GM12878 (cell line): ENCODE measurements at regions of chr10 and their contacts with region 1.

Region 1: GRCh38 chr10:110871298-110872084 is at the start of gene PDCD4:
- DNase-seq: peak; percentile 86
- ATAC-seq: peak; percentile 78
- H3K4me3 ChIP-seq: peak within 1 kb of the TSS; percentile 65
- H3K27ac ChIP-seq: peak within 1 kb of the TSS; percentile 99
- H3K4me1 ChIP-seq: peaks cover 48% of the 10 kb centered on the region
- H3K27me3 ChIP-seq: no peaks in the 10 kb centered on the region
- CTCF ChIP-seq: no peak
- EP300 ChIP-seq: no peak
- POLR2A ChIP-seq: peak; percentile 96
- RAD21 ChIP-seq: no peak
- polyA plus RNA-seq, gene PDCD4: 101 to 138 TPM

Region 2: GRCh38 chr10:110843031-110843430 is 28.5 kb before region 1 on chr10:
- CTCF ChIA-PET with region 1: interaction called, 31 read pairs
- POLR2A ChIA-PET with region 1: interaction called, 78 read pairs
- RAD21 ChIA-PET with region 1: interaction called, 138 read pairs
- SMC1A ChIA-PET with region 1: interaction called, 139 read pairs
- in situ Hi-C with region 1: no loop called
- intact Hi-C with region 1: loop called (anchors 1 kb)
- DNase-seq: peak; percentile 98
- ATAC-seq: peak; percentile 74
- H3K4me3 ChIP-seq: peak overlapping the region; percentile 68
- H3K27ac ChIP-seq: peak overlapping the region; percentile 97
- H3K4me1 ChIP-seq: peaks cover 53% of the 10 kb centered on the region
- H3K27me3 ChIP-seq: no peaks in the 10 kb centered on the region
- CTCF ChIP-seq: no peak
- EP300 ChIP-seq: peak; percentile 53 to 91; a peak in 3 of 4 replicates
- POLR2A ChIP-seq: no peak; the same call in 1 of the 2 replicates
- RAD21 ChIP-seq: peak; percentile 37; the same call in 1 of the 2 replicates

Region 3: DNA sequence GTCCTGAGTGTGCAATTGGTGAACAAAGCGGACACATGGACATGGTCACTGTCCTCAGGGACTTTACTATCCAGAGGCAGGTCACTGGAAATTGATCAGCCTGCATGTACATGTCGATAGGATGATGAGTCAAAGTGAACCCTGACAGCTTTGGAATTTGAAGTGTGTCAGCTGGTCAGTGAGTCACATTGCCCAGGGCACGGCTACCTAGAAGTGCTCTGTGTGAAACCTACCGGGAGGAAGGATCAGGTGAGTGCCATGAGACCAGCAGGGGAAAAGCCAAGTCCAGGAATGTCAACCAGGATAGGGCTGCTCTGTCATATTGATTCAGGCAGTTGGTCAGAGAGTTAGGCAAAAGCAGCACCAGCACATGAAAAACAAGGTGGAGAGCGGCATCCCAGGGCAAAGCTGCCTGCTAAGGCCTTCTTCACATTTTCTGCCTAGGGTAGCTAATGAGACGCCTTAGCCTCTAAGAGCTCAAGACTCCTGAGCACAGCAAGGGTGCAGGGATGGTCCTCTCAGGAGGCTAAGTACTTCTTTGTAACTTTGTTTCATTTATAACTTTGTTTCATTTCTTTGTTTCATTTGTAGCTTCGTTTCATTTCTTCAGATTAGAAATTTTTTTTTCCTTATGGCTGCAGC is 19.1 kb before region 1 on chr10:
- CTCF ChIA-PET with region 1: interaction called, 9 read pairs
- POLR2A ChIA-PET with region 1: interaction called, 36 read pairs
- RAD21 ChIA-PET with region 1: interaction called, 138 read pairs
- SMC1A ChIA-PET with region 1: interaction called, 139 read pairs
- in situ Hi-C with region 1: no loop called
- intact Hi-C with region 1: no loop called
- DNase-seq: no peak
- ATAC-seq: peak; percentile 28
- H3K4me3 ChIP-seq: no peak overlapping the region
- H3K27ac ChIP-seq: peak overlapping the region; percentile 39
- H3K4me1 ChIP-seq: peaks cover 53% of the 10 kb centered on the region
- H3K27me3 ChIP-seq: no peaks in the 10 kb centered on the region
- CTCF ChIP-seq: no peak
- EP300 ChIP-seq: no peak
- POLR2A ChIP-seq: no peak
- RAD21 ChIP-seq: no peak

Region 4: GRCh38 chr10:110857265-110858158 is 14.0 kb before region 1 on chr10:
- CTCF ChIA-PET with region 1: interaction called, 6 read pairs
- POLR2A ChIA-PET with region 1: interaction called, 36 read pairs
- RAD21 ChIA-PET with region 1: interaction called, 47 read pairs
- SMC1A ChIA-PET with region 1: interaction called, 86 read pairs
- in situ Hi-C with region 1: no loop called
- intact Hi-C with region 1: no loop called
- DNase-seq: peak; percentile 78
- ATAC-seq: peak; percentile 39
- H3K4me3 ChIP-seq: no peak overlapping the region
- H3K27ac ChIP-seq: peak overlapping the region; percentile 98
- H3K4me1 ChIP-seq: peaks cover 67% of the 10 kb centered on the region
- H3K27me3 ChIP-seq: no peaks in the 10 kb centered on the region
- CTCF ChIP-seq: no peak
- EP300 ChIP-seq: no peak
- POLR2A ChIP-seq: no peak
- RAD21 ChIP-seq: no peak

Region 5: GRCh38 chr10:110883924-110884323 is 12.4 kb after region 1 on chr10:
- CTCF ChIA-PET with region 1: interaction called, 8 read pairs
- POLR2A ChIA-PET with region 1: interaction called, 27 read pairs
- RAD21 ChIA-PET with region 1: interaction called, 13 read pairs
- SMC1A ChIA-PET with region 1: interaction called, 66 read pairs
- in situ Hi-C with region 1: no loop called
- intact Hi-C with region 1: no loop called
- DNase-seq: no peak
- ATAC-seq: peak; percentile 5; the same call in 2 of the 3 replicates
- H3K4me3 ChIP-seq: no peak overlapping the region; the same call in 1 of the 2 replicates
- H3K27ac ChIP-seq: no peak overlapping the region
- H3K4me1 ChIP-seq: peaks cover 6% of the 10 kb centered on the region
- H3K27me3 ChIP-seq: no peaks in the 10 kb centered on the region
- CTCF ChIP-seq: no peak
- EP300 ChIP-seq: no peak
- POLR2A ChIP-seq: no peak
- RAD21 ChIP-seq: no peak

Region 6: GRCh38 chr10:110893559-110894179 is 22.2 kb after region 1 on chr10:
- CTCF ChIA-PET with region 1: interaction called, 10 read pairs
- POLR2A ChIA-PET with region 1: interaction called, 27 read pairs
- RAD21 ChIA-PET with region 1: interaction called, 8 read pairs
- SMC1A ChIA-PET with region 1: interaction called, 54 read pairs
- in situ Hi-C with region 1: no loop called
- intact Hi-C with region 1: no loop called
- DNase-seq: no peak
- ATAC-seq: peak; percentile 93
- H3K4me3 ChIP-seq: no peak overlapping the region
- H3K27ac ChIP-seq: no peak overlapping the region
- H3K4me1 ChIP-seq: no peaks in the 10 kb centered on the region
- H3K27me3 ChIP-seq: no peaks in the 10 kb centered on the region
- CTCF ChIP-seq: peak; percentile 34 to 52 (median 44); a peak in 4 of 6 replicates
- EP300 ChIP-seq: no peak
- POLR2A ChIP-seq: no peak
- RAD21 ChIP-seq: peak; percentile 66

Region 7: GRCh38 chr10:110901954-110902819 is 30.7 kb after region 1 on chr10:
- CTCF ChIA-PET with region 1: interaction called, 8 read pairs
- POLR2A ChIA-PET with region 1: interaction called, 4 read pairs
- RAD21 ChIA-PET with region 1: no interaction called
- SMC1A ChIA-PET with region 1: interaction called, 12 read pairs
- in situ Hi-C with region 1: no loop called
- intact Hi-C with region 1: no loop called
- DNase-seq: no peak
- ATAC-seq: peak; percentile 49
- H3K4me3 ChIP-seq: no peak overlapping the region
- H3K27ac ChIP-seq: no peak overlapping the region
- H3K4me1 ChIP-seq: peaks cover 7% of the 10 kb centered on the region; the same call in 1 of the 2 replicates
- H3K27me3 ChIP-seq: no peaks in the 10 kb centered on the region
- CTCF ChIP-seq: no peak
- EP300 ChIP-seq: no peak
- POLR2A ChIP-seq: peak; percentile 12; the same call in 1 of the 2 replicates
- RAD21 ChIP-seq: no peak

Region 8: DNA sequence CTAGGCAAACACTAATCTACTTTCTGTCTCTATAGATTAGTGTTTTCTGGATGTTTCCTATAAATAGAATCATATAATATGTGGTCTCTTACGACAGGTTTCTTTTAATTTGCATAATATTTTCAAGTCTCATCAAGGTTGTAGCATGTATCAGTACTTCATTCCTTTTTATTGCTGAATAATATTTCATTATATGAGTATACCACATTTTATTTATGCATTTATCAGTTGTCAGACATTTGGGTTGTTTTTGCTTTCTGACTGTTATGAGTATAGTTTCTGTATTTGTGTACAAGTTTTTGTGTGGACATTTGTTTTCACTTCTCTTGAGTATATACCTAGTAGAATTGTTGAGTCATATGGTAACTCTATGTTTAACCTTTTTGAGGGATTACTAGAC is 96.2 kb after region 1 on chr10:
- CTCF ChIA-PET with region 1: no interaction called
- POLR2A ChIA-PET with region 1: no interaction called
- RAD21 ChIA-PET with region 1: no interaction called
- SMC1A ChIA-PET with region 1: no interaction called
- in situ Hi-C with region 1: no loop called
- intact Hi-C with region 1: no loop called
- DNase-seq: no peak
- ATAC-seq: peak; percentile 54
- H3K4me3 ChIP-seq: no peak overlapping the region
- H3K27ac ChIP-seq: no peak overlapping the region
- H3K4me1 ChIP-seq: peaks cover 3% of the 10 kb centered on the region; the same call in 1 of the 2 replicates
- H3K27me3 ChIP-seq: no peaks in the 10 kb centered on the region
- CTCF ChIP-seq: no peak
- EP300 ChIP-seq: no peak
- POLR2A ChIP-seq: no peak
- RAD21 ChIP-seq: no peak

Region 9: DNA sequence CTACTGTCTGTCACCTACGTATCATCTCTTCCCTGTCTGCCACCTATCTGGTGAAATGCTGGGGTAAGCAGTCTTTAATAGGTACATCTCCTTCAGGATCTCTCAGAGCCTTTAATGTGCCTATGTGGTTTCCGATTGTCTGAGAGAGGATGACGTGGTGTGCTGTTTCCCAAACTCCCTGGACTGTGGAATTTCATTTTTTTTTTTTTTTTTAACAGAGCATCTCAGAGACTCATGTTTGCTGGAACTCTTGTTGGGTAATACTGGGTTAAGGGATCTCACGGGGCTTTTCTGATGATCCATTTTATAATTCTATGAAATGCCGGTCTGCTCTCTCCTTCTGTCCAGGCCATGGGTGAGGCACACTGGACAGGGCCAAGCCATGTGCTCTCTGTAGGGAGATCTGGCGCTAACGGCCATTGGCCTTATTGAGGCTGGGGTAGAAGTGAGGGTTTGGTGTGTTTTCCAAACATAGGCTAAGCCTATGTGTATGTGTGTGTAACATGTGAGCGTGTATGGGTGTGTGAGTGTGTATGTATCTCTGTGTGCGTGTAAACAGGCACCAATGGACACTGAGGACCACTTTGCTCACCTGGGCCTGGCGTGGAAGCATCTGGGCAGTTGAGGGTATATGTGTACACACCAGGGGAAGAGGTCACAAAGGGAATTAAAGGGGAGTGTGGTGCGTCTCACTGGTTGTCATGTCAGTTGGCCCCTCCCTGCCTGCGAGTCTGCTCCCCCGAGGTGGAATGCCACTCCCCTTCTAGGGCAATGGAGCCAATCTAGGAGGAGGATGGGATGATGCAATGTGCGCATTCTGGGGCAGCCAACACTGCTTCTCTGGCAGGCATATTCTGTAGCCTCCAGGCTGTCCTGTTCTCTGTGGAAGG is 213.1 kb after region 1 on chr10:
- CTCF ChIA-PET with region 1: no interaction called
- POLR2A ChIA-PET with region 1: no interaction called
- RAD21 ChIA-PET with region 1: no interaction called
- SMC1A ChIA-PET with region 1: no interaction called
- in situ Hi-C with region 1: no loop called
- intact Hi-C with region 1: no loop called
- DNase-seq: no peak
- ATAC-seq: no peak
- H3K4me3 ChIP-seq: no peak overlapping the region
- H3K27ac ChIP-seq: no peak overlapping the region
- H3K4me1 ChIP-seq: no peaks in the 10 kb centered on the region
- H3K27me3 ChIP-seq: peaks cover 0 to 1% of the 10 kb centered on the region in 2 experiments; a peak in 2 of 4 replicates
- CTCF ChIP-seq: no peak
- EP300 ChIP-seq: no peak
- POLR2A ChIP-seq: no peak
- RAD21 ChIP-seq: no peak